Dendritic cell treated with granulocyte-macrophage colony-stimulating factor and Interleukin-4, amounts not matched to agents 40 ng/mL and 50 ng/mL, for 4 days (primary cell): ENCODE measurements at regions of chr1 and their contacts with region 1.

Region 1: GRCh38 chr1:77779529-77780281 is at the start of gene MIGA1:
- H3K4me3 Mint-ChIP-seq: peak within 1 kb of the TSS; percentile 92
- H3K27ac Mint-ChIP-seq: peak within 1 kb of the TSS; percentile 80
- H3K4me1 Mint-ChIP-seq: peaks cover 15% of the 10 kb centered on the region
- H3K27me3 Mint-ChIP-seq: no peaks in the 10 kb centered on the region

Region 2: GRCh38 chr1:77533660-77534305 is 245.9 kb before region 1 on chr1:
- intact Hi-C with region 1: no loop called
- H3K4me3 Mint-ChIP-seq: no peak overlapping the region
- H3K27ac Mint-ChIP-seq: no peak overlapping the region
- H3K4me1 Mint-ChIP-seq: peaks cover 16% of the 10 kb centered on the region
- H3K27me3 Mint-ChIP-seq: no peaks in the 10 kb centered on the region

Region 3: DNA sequence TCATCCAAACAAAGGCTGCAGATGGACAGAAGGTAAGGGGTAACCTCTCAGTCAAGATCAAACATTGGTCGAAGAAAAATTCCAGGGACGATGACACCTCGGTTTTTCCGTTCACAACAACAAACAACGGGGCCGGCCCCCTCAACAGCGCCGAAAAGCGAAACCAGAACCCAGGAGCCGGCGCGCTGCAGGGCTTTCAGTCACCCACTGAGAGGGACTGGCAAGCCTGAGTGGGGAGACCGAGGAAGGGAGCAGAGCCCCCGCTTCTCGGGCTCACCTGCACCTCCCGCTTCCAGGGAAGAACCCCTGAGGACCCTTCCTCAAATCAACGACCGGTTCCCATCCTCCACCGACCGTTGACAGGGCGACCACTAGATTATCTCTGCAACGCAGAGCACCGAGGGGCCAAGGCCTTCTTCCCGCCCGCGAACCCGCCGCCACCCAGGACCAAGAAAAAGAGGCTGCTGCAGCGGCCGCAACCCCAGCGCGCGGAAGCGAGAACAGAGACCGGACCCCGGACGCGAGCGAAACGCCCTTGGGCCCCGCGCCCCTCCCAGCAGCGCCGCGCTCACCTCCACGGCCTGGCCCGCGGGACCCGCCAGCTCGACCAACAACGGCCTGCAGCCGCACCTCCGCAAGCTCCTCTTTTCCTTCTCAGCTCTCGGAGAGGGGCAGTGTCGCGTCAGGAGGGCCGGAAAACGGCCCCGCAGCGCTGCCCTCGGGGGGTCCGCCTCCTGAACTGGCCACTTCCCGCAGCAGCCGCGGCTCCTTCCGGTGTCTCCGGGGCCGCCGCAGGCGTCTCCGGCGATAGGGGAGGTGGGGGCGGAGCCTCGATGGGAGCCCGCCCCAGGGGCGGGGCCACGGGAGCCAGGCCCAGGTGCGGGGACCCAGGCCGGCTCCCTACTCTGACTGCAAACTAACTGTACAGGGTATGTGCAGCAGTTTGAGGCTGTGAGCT is 20.4 kb before region 1 on chr1 and contains the start of gene USP33:
- intact Hi-C with region 1: loop called (anchors 1 kb)
- H3K4me3 Mint-ChIP-seq: peak within 1 kb of the TSS; percentile 95
- H3K27ac Mint-ChIP-seq: peak within 1 kb of the TSS; percentile 94
- H3K4me1 Mint-ChIP-seq: peaks cover 32% of the 10 kb centered on the region
- H3K27me3 Mint-ChIP-seq: no peaks in the 10 kb centered on the region